ENCODE measurements at regions of chr12 and their contacts with region 1.

Region 1: DNA sequence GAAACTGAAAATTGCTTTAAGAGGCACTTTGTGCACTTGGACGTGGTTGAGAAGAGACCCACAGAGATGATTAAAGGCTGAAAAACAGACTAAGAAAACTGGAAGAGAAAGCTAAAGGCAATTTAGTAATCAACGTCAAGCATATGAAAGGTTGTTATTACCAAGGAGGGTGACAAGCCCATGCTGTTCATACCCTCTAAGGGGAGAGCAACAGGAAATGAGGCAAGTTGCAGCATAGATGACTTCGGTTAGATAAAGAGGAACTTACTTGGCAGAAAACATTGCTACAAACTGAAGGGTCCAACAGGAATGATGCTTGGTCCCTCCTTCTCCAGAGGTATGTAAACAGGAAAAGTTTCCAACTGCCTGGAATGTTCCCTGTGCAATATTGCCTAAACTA is 107.8 kb downstream of the DUSP6 start:
- DNase-seq: peak; percentile 65
- ATAC-seq: peak; percentile 74
- H3K4me3 Mint-ChIP-seq: peak overlapping the region; percentile 66
- H3K27ac Mint-ChIP-seq: peak overlapping the region; percentile 86
- H3K4me1 Mint-ChIP-seq: peaks cover 71% of the 10 kb centered on the region
- H3K27me3 Mint-ChIP-seq: no peaks in the 10 kb centered on the region

Region 2: DNA sequence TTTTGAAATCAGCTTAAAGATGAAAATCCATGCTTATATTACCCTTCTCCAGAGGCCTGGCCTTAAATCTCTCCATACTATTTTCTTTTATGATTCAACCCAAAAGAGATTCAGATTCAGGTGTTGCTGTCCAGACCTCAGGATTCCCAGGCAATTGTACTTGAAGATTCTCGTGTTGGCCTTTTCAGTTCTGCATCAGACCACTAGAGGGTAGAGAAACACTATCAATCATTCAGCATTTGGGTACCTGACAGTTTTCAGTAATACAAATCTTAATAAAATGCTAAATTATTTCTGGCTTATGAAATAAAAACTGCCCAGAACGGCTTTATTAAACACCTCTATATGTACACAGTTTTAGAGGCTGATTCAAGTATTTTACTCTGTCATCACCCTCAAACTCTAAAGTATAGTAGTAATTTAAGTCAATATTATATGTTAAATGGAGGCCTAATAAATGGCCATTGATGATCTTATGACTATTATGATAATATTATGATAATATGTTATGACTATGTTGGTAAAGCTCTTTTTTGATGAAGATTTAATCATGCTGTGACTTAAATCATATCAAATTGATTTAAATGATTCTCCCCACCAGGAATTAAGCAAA is 193.4 kb before region 1 on chr12:
- CTCF ChIA-PET with region 1: interaction called, 21 read pairs
- POLR2A ChIA-PET with region 1: interaction called, 3 read pairs
- DNase-seq: peak; percentile 55
- ATAC-seq: peak; percentile 77
- H3K4me3 Mint-ChIP-seq: no peak overlapping the region
- H3K27ac Mint-ChIP-seq: no peak overlapping the region
- H3K4me1 Mint-ChIP-seq: peaks cover 32% of the 10 kb centered on the region
- H3K27me3 Mint-ChIP-seq: no peaks in the 10 kb centered on the region

Region 3: DNA sequence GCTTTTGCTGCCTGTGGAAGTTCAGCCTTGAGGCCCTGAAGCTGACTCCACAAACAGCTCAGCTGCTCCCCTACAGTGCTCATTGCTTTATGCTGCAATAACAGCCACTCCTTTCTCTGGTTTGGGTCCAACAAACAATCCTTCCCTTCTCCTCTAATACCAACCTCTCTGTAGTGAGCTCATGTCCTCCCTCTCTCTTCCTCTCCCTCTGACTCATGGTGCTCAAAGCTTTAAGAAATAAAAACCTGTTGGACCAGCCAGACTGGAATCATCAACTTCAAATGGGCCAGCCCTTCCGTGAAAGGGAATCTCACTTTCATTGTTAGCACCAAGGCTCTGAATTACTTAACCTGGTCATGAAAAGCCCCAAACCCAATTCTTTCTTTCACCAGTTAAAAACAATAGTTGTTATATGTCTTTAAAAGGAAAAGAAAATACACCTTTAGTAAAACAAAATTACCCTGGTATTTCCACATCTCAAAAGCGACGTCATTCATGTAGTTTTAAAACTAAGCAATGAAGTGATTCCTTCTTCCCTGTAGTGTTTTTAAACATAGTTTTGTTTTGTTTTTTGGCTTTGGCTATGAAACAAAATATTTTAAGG is 18.6 kb before region 1 on chr12:
- CTCF ChIA-PET with region 1: interaction called, 50 read pairs
- POLR2A ChIA-PET with region 1: interaction called, 12 read pairs
- DNase-seq: no peak
- ATAC-seq: peak; percentile 52
- H3K4me3 Mint-ChIP-seq: peak overlapping the region; percentile 45
- H3K27ac Mint-ChIP-seq: peak overlapping the region; percentile 89
- H3K4me1 Mint-ChIP-seq: peaks cover 79% of the 10 kb centered on the region
- H3K27me3 Mint-ChIP-seq: no peaks in the 10 kb centered on the region

Region 4: GRCh38 chr12:89261982-89262381 is 17.4 kb after region 1 on chr12:
- CTCF ChIA-PET with region 1: interaction called, 23 read pairs
- POLR2A ChIA-PET with region 1: interaction called, 3 read pairs
- DNase-seq: no peak
- ATAC-seq: no peak
- H3K4me3 Mint-ChIP-seq: no peak overlapping the region
- H3K27ac Mint-ChIP-seq: no peak overlapping the region
- H3K4me1 Mint-ChIP-seq: peaks cover 5% of the 10 kb centered on the region
- H3K27me3 Mint-ChIP-seq: no peaks in the 10 kb centered on the region

Region 5: DNA sequence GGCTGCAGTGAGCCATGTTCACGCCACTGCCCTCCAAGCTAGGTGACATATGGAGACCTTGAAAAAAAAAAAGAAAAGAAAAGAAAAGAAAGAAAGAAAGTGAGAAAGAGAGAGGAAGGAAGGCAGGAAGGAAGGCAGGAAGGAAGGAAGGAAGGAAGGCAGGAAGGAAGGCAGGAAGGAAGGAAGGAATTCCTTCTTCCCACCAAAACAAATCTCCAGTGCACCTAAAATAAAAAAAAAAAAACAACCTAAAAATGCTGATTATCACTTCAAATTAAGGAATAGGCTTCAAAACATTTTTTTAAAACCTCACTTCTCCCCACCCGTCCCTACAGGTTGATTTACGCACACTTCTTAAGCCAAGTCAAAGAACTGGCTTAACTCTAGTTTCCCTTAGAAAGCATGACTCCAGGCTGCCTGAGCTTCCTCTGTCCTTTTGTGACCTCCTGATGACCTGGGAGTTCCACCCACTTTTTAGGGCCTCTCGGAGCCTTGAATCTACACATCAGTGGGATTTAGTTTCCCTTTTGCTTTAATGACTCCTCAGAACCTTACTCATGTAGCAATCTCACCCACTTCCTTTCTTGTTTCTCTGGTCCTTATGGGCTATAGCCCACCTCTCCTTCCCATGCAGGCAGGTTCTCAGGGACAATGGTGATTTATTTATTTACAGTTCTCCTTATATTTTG is 89.2 kb after region 1 on chr12:
- CTCF ChIA-PET with region 1: no interaction called
- POLR2A ChIA-PET with region 1: no interaction called
- DNase-seq: peak; percentile 51
- ATAC-seq: peak; percentile 89
- H3K4me3 Mint-ChIP-seq: peak overlapping the region; percentile 54
- H3K27ac Mint-ChIP-seq: peak overlapping the region; percentile 58
- H3K4me1 Mint-ChIP-seq: peaks cover 27% of the 10 kb centered on the region
- H3K27me3 Mint-ChIP-seq: no peaks in the 10 kb centered on the region

Region 6: DNA sequence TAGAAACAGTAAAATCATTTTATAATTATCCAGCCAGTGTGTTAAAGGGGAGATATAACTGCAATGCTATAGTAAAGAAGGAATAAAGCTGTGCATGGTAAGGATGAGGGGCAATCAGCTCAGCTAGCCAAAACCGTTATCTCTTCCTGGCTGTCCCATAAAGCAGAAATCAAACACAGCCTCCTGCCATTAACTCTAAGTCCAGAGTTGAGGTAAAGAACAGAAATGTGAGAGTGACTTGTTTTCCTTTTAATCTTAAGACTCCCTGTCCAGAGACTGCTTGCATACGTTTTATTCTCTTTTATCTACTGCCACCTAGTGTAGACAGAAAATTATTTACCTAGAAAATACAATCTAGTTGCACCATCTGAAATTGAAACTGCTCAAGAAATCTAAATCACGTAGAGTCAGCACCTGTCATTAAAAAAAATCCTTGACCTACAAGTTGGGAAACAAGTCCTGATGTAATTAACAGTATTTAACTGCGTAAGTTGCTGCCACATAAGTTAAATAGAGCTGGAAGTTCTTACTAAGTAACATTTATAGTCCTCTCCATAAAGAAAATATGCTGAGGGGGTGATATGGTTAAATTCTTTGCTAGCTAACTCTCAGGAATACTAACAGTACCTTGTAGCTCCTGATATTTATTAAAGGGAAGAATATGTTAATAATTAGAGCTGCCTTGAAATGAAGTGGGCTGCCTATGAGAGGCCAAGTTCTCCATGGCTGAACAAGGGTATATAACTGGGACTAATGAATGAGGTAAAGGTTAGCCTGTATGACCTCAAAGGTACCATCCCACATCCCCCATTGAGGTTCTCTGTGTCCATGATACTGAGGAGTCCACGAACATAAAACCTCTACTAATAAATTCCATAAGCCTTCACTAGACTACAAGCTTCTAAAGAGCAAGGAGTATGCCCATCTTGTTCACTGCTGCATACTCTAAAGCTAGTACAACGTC is 217.4 kb after region 1 on chr12:
- CTCF ChIA-PET with region 1: interaction called, 19 read pairs
- POLR2A ChIA-PET with region 1: no interaction called
- DNase-seq: no peak
- ATAC-seq: peak; percentile 87
- H3K4me3 Mint-ChIP-seq: peak overlapping the region; percentile 76
- H3K27ac Mint-ChIP-seq: peak overlapping the region; percentile 28
- H3K4me1 Mint-ChIP-seq: peaks cover 68% of the 10 kb centered on the region
- H3K27me3 Mint-ChIP-seq: no peaks in the 10 kb centered on the region